Activated B cell treated with CpG ODN at 0.5 μM for 24 hours (primary cell): ENCODE measurements at regions of chr10 and their contacts with region 1.

Region 1: GRCh38 chr10:87861953-87862678 is 1.2 kb downstream of the KLLN start:
- DNase-seq: peak; percentile 93
- ATAC-seq: peak; percentile 68
- H3K4me3 Mint-ChIP-seq: peak overlapping the region; percentile 97
- H3K27ac Mint-ChIP-seq: peak overlapping the region; percentile 98
- H3K4me1 Mint-ChIP-seq: peaks cover 30% of the 10 kb centered on the region
- H3K27me3 Mint-ChIP-seq: no peaks in the 10 kb centered on the region
- CTCF ChIP-seq: no peak

Region 2: DNA sequence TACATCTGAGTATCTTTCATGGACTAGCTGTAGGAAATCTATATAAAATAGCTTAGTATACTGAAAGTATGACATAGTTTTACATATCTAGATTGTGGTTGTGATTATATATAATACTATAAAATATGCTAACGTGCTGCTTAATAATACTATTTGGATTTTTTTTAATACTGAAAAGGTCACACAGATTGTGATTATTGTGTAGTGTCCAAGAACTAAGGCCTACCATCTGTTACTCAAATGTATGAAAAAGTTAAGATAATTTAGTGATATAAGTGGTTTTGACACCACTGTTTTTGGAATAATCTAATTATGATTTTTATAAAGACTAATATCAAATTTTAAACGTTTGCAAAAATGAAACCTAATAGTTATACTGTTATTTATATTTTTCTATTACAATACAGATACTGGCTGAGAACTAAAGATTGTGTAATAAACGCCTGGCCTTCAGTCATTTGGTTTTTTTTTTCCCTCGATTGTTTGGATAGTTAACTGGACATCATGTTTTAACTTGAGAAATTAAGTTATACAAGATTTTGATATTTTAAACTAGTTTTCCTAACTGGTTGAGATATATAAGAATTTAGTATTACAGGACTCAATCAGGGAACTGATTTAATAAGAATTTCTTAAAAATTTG is 13.9 kb after region 1 on chr10:
- CTCF ChIA-PET with region 1: interaction called, 3 read pairs
- POLR2A ChIA-PET with region 1: interaction called, 27 read pairs
- intact Hi-C with region 1: loop called (anchors 1 kb)
- DNase-seq: no peak
- ATAC-seq: no peak
- H3K4me3 Mint-ChIP-seq: no peak overlapping the region
- H3K27ac Mint-ChIP-seq: no peak overlapping the region
- H3K4me1 Mint-ChIP-seq: peaks cover 63% of the 10 kb centered on the region
- H3K27me3 Mint-ChIP-seq: no peaks in the 10 kb centered on the region
- CTCF ChIP-seq: no peak

Region 3: DNA sequence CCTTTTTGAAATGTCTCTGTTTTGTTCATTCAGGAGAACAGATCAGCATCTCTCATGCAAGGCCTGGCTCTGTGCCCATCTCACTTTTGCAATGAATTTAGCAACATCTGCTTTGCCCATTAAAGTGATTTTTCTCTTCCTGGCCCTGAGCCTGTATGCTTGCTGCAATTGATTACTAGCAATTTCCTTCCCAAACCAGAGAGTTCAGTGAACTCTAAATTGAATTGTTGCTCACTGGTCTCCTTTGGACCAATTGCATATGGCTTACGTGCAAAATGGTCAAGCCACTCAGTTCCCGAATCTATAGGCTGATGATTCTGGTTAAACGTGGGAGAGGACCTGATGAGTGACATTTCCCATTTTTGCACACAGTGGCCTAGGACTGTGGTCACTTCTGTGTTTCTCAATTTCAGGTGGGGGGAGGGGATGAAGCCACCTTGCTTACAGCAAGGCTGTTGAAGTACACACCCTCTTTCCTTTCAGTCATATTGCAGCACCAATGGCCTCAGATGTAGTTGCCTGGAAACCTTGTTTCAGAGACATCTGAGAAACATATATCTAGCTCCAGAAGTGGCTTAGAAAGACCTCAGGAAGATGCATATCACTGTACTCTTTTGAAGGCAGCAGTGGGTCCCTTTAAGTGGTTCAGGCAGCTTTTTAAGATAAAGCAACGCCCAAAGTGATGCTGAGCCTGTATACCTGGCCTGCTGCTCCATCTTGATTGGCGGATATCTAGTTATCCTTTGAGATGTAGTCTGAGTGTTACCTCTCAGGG is 202.7 kb after region 1 on chr10:
- CTCF ChIA-PET with region 1: interaction called, 3 read pairs
- POLR2A ChIA-PET with region 1: interaction called, 88 read pairs
- intact Hi-C with region 1: no loop called
- DNase-seq: no peak
- ATAC-seq: no peak
- H3K4me3 Mint-ChIP-seq: no peak overlapping the region
- H3K27ac Mint-ChIP-seq: no peak overlapping the region
- H3K4me1 Mint-ChIP-seq: peaks cover 95% of the 10 kb centered on the region
- H3K27me3 Mint-ChIP-seq: no peaks in the 10 kb centered on the region
- CTCF ChIP-seq: no peak

Region 4: DNA sequence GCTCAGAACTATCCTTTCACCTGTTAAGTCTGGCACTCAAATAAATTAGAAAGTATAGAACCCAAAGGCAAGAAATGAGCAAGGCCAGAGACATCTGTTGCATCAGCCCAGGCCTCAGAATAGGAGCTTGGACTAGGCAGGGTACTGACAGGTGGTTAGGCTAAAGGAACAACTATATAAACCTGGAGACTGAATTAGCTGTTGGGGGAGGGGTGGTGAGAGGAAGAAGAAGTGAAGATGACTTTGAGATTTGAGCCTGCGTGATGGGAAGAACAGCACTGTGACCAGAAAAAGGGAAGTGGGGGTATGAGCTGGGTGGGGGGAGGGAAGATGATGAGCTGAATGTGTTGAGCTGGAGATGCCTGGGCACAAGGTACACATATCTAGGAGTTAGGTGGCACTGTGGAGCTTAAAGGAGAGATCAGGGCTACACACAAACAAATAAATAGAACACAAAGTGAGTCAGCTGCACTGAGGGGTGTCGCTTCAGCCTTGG is 246.0 kb after region 1 on chr10:
- CTCF ChIA-PET with region 1: interaction called, 45 read pairs
- POLR2A ChIA-PET with region 1: interaction called, 257 read pairs
- intact Hi-C with region 1: loop called (anchors 1 kb)
- DNase-seq: no peak
- ATAC-seq: peak; percentile 72
- H3K4me3 Mint-ChIP-seq: peak overlapping the region; percentile 55
- H3K27ac Mint-ChIP-seq: peak overlapping the region; percentile 95
- H3K4me1 Mint-ChIP-seq: peaks cover 58% of the 10 kb centered on the region
- H3K27me3 Mint-ChIP-seq: no peaks in the 10 kb centered on the region
- CTCF ChIP-seq: no peak

Region 5: GRCh38 chr10:88270871-88271713 is 409.0 kb after region 1 on chr10:
- CTCF ChIA-PET with region 1: no interaction called
- POLR2A ChIA-PET with region 1: interaction called, 18 read pairs
- intact Hi-C with region 1: loop called (anchors 1 kb)
- DNase-seq: peak; percentile 16
- ATAC-seq: peak; percentile 93
- H3K4me3 Mint-ChIP-seq: peak overlapping the region; percentile 40
- H3K27ac Mint-ChIP-seq: peak overlapping the region; percentile 56
- H3K4me1 Mint-ChIP-seq: peaks cover 46% of the 10 kb centered on the region
- H3K27me3 Mint-ChIP-seq: no peaks in the 10 kb centered on the region
- CTCF ChIP-seq: no peak

Region 6: DNA sequence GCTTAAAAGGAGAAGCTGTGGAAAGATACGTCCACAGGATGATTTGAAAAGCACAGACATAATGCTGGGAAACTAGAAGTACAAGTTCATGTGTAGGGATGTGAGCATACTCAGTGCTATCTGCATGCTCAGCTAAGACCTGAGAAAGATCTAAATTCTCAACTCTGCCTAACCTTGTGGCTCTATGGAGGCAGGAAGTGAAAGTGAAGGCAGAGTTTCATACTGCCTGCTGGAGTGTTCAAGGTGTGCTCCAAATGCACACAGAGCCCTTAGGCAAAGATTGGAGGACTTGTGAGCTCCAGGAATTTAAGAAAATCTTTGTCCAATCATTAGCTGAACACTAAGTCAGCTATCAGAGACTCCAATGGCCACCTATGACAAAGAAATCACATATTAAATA is 530.1 kb after region 1 on chr10:
- CTCF ChIA-PET with region 1: interaction called, 112 read pairs
- POLR2A ChIA-PET with region 1: interaction called, 220 read pairs
- intact Hi-C with region 1: loop called (anchors 1 kb)
- DNase-seq: no peak
- ATAC-seq: peak; percentile 89
- H3K4me3 Mint-ChIP-seq: peak overlapping the region; percentile 13
- H3K27ac Mint-ChIP-seq: peak overlapping the region; percentile 20
- H3K4me1 Mint-ChIP-seq: peaks cover 14% of the 10 kb centered on the region
- H3K27me3 Mint-ChIP-seq: no peaks in the 10 kb centered on the region
- CTCF ChIP-seq: no peak

Region 7: GRCh38 chr10:88880282-88881076 is 1018.4 kb after region 1 on chr10:
- CTCF ChIA-PET with region 1: no interaction called
- POLR2A ChIA-PET with region 1: interaction called, 7 read pairs
- intact Hi-C with region 1: loop called (anchors 5 kb)
- DNase-seq: peak; percentile 77
- ATAC-seq: peak; percentile 71
- H3K4me3 Mint-ChIP-seq: peak overlapping the region; percentile 96
- H3K27ac Mint-ChIP-seq: peak overlapping the region; percentile 99
- H3K4me1 Mint-ChIP-seq: peaks cover 52% of the 10 kb centered on the region
- H3K27me3 Mint-ChIP-seq: no peaks in the 10 kb centered on the region
- CTCF ChIP-seq: no peak